ENCODE measurements at regions of chr3 and their contacts with region 1.

Region 1: GRCh38 chr3:89179355-89180001 is 72.1 kb downstream of the EPHA3 start:
- DNase-seq: peak; percentile 31

Region 2: DNA sequence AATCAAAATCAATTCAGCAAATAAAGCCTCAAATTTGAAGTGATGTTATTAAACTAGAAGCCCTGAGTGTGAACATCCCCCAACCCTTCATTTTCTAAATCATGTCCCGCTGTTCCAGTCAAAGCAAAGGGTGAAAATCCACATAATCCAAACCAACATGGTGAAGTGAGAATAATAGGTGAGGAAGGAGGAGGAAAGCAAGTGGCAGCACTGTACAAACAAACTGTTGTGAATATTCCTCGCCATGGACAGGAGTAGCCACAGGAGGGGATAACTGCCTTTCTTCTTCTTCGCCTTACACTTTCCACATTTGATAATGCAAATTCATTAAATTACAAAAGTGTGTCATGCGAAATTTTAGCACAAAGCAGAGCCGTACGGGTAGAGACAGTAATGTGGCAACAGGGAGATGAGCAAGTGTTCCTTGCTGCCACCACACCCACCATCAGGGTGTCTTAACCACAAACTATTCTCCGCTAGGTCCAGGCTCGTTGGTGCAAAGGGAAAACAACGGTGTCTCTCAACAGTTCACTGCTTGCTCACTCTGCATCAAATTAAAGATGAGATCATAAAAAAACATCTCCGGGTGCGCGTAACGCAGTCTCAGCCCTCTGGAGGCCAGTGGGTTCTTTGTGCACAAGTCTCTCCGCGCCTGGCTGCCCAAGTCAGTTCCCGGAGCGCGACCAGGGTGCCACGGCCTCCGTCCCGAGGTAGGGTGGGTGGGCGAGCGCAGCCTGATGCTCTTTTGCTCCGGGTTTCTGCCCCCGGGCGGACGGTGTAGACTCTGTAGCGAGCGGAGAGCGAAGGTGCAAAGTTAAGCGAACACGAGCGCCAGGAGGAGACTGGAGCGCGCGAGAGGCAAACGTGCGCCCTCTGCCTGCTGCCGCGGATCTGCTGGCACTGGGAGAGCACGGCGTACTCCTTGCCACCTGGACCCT is 65.3 kb before region 1 on chr3:
- CTCF ChIA-PET with region 1: interaction called, 10 read pairs
- POLR2A ChIA-PET with region 1: no interaction called
- DNase-seq: peak; percentile 59

Region 3: DNA sequence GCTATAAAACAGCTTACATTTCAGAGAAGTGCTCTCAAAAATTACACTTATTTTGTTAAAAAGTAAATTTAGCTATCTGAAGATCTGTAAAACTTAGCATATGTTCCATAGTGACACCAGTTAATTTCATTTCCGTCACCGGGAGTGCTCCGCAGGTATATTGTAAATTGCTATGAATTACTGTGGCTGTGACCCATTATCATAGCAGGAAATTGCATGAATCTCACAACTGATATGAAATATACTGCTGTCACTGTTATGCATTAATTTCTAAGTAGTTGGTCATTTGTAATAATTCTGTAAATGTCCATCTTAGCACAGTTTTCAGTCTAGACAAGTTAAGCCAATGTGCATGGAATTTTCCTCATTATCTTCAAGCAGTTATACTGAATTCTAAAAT is 19.1 kb after region 1 on chr3:
- CTCF ChIA-PET with region 1: no interaction called
- POLR2A ChIA-PET with region 1: no interaction called
- DNase-seq: no peak